Right ventricle myocardium superior (tissue), 1 donor: ENCODE measurements at regions of chr18 and their contacts with region 1.

Region 1: DNA sequence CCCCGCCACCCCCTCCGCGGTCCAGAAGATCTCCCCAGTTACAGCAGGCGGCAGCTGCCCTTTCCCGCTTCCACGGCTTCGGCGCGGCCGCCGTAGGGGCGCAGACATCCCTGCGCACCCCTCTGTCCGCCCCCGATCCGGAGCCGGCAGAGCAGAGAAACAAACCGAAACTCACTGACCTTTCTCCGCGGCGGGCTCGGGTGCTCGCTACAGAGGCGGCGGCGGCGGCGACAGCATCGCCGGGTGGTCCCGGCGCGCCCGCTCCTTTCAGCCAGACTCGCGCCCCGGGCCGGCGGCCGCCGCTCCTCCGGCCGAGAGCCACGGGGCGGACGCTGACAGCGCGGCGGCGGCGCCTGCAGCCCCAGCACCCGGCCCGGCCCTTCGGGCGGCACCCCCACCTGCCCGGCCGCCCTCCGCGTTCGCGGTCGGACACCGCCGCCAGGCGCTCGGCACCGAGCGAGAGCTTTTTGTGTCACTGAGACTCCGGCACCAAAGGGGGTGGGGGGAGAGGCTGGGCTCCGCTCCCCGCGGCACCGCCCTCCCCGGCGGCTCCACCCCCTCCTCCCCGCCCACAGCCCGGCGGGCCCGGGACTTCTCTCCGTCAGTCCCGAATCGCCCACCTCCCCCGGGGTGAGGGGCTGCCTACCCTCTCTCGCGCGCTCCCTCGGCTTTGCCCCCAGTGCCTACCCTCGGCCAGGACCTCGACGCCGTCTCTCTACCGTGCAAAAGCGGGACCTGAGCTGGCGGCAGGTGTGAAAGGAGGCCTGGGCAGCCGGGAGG is 1.4 kb upstream of the RNF152 start:
- DNase-seq: peak; percentile 88
- ATAC-seq: peak; percentile 94

Region 2: GRCh38 chr18:61581578-61582201 is 312.5 kb before region 1 on chr18:
- intact Hi-C with region 1: loop called (anchors 10 kb)
- DNase-seq: peak; percentile 88
- ATAC-seq: peak; percentile 95

Region 3: GRCh38 chr18:61635901-61636528 is 258.1 kb before region 1 on chr18:
- intact Hi-C with region 1: loop called (anchors 5 kb)
- DNase-seq: peak; percentile 53
- ATAC-seq: peak; percentile 91

Region 4: DNA sequence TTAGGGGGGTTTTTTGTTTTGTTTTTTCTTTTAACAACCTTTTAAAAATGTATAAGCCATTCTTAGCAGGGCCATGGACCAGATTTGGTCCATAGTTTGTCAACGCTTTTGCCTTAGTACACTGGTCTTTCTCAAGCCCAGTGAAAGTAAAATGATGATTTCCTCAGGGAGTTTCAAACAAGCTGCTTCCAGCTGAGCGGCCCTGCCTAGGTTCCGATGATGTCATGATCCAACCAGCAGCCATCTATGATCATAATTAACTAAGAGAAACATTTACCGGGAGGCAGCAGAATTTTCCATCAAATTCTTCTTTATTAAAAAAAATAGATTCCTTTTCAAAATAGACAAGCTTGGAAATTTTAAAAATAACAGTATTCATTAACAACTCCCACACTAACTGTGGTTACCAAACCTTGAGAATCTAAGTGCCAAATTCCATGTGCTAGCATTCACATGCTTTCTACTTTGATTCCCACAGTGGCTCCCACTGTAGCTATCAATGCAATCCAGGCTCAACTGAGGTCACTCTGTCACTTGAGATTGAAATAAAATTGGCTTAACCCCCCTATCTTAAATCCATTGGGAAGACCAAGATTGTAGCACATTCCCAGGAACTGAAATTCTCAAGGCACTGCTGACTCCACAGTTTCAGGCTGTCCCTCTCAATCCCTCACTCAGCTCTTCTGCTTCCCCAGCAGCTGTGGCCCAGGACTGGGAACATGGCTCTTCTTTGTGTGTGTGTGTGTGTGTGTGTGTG is 150.2 kb before region 1 on chr18:
- intact Hi-C with region 1: loop called (anchors 10 kb)
- DNase-seq: peak; percentile 70
- ATAC-seq: peak; percentile 85

Region 5: GRCh38 chr18:61972389-61973264 is 78.5 kb after region 1 on chr18:
- intact Hi-C with region 1: no loop called
- DNase-seq: no peak
- ATAC-seq: peak; percentile 38